T-cell (primary cell): ENCODE measurements at regions of chr20 and their contacts with region 1.

Region 1: GRCh38 chr20:53402233-53403005 is 191.2 kb downstream of the ZNF217 start:
- DNase-seq: peak in 25 of 35 experiments; percentile 2 to 58 (median 17)
- ATAC-seq: peak; percentile 90 to 99 (median 94)
- H3K4me3 ChIP-seq: no peak overlapping the region
- H3K4me3 Mint-ChIP-seq: peak overlapping the region in 2 of 3 donors; percentile 4 to 40
- H3K27ac ChIP-seq: no peak overlapping the region
- H3K27ac Mint-ChIP-seq: peak overlapping the region; percentile 37 to 81
- H3K4me1 ChIP-seq: peaks cover 0 to 6% of the 10 kb centered on the region in 2 experiments
- H3K4me1 Mint-ChIP-seq: peaks cover 26 to 57% (median 39%) of the 10 kb centered on the region in 3 donors
- H3K27me3 ChIP-seq: no peaks in the 10 kb centered on the region
- H3K27me3 Mint-ChIP-seq: no peaks in the 10 kb centered on the region

Region 2: DNA sequence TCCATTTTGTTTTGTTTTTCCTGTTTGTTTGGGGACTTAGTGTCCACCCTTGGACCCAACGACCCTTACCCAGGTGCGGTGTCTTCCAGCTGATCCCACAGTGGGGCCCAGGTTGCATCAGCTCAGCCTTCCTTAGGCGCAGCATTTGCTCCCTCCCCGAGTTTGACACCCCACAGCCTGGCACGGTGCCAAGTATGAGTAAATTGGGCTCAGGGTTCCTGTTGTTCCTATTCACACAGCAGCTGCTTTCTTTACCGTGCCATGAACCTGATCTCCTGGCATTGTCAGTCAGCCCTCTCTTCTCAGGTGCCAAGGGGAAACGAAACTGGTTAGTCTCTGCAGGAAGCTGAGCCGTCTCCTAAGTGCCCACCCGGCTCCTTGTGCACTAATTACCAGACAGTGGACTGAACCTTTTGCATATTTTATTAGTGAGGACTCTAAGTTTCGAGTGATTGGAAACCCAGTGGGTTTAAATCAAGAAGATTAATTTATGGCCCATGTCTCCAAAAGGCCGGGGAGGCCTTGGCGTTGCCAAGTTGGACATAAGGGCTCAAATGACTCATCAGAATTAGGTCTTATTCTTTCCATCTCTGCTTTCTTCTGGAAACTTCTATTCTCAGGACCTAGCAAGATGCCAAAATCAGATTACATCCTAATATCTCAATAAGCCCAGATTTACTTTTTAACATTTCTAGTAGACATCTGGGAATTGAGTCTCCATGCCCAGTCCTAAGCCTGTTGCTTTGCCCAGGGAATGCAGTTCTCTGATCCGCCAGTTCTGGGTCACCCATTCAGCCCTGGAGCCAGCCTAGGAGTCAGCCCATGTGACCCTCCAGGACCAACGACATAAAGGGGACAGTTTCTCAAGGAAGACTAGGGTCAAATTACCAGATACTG is 361.5 kb before region 1 on chr20:
- CTCF ChIA-PET with region 1: no interaction called
- POLR2A ChIA-PET with region 1: no interaction called
- DNase-seq: no peak
- ATAC-seq: no peak
- H3K4me3 ChIP-seq: no peak overlapping the region
- H3K4me3 Mint-ChIP-seq: no peak overlapping the region
- H3K27ac ChIP-seq: no peak overlapping the region
- H3K27ac Mint-ChIP-seq: no peak overlapping the region
- H3K4me1 ChIP-seq: no peaks in the 10 kb centered on the region
- H3K4me1 Mint-ChIP-seq: peaks cover 0 to 21% (median under 1%) of the 10 kb centered on the region in 3 donors
- H3K27me3 ChIP-seq: peaks cover 0 to 5% of the 10 kb centered on the region in 2 experiments
- H3K27me3 Mint-ChIP-seq: peaks cover 4% of the 10 kb centered on the region in 2 donors

Region 3: DNA sequence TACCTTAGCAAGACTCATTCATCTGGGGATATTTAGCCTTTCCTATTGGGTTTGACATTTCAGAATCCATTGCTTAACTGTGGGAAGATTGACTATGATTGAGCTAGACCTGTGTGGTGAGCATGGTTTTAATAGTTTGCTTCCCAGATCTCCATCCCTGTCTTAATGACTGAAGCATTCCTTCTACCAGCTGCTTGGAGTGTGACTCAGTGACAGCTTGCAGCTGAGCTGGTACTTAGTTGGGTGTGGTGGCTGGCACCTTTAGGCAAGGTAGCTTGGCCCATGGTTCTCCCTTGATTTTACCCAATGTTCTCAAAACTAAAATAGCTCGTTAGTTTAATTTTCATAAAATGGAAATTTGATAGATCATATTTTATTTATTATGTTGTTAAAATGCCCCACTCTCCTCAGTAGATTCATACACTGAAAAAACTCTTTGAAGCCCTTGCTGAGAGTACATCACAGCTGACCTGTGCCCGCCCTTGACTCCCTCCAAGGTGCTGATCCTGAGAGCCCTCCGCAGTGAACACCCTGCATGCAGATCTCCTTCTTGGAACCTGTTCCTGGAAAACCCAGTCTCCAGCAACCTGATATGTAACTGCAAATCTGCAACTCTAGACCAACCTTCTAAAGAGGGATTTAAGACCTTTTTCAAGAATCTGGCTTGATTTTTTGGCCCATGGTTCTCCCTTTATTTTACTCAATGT is 1092.0 kb after region 1 on chr20:
- CTCF ChIA-PET with region 1: interaction called in 1 of 2 experiments, 12 read pairs
- POLR2A ChIA-PET with region 1: no interaction called
- DNase-seq: no peak
- ATAC-seq: no peak
- H3K4me3 ChIP-seq: no peak overlapping the region
- H3K4me3 Mint-ChIP-seq: no peak overlapping the region
- H3K27ac ChIP-seq: no peak overlapping the region
- H3K27ac Mint-ChIP-seq: no peak overlapping the region
- H3K4me1 ChIP-seq: no peaks in the 10 kb centered on the region
- H3K4me1 Mint-ChIP-seq: no peaks in the 10 kb centered on the region
- H3K27me3 ChIP-seq: peaks cover 0 to 3% of the 10 kb centered on the region in 2 experiments
- H3K27me3 Mint-ChIP-seq: peaks cover 8 to 9% of the 10 kb centered on the region in 2 donors